HepG2 (cell line): ENCODE measurements at regions of chr7 and their contacts with region 1.

Region 1: DNA sequence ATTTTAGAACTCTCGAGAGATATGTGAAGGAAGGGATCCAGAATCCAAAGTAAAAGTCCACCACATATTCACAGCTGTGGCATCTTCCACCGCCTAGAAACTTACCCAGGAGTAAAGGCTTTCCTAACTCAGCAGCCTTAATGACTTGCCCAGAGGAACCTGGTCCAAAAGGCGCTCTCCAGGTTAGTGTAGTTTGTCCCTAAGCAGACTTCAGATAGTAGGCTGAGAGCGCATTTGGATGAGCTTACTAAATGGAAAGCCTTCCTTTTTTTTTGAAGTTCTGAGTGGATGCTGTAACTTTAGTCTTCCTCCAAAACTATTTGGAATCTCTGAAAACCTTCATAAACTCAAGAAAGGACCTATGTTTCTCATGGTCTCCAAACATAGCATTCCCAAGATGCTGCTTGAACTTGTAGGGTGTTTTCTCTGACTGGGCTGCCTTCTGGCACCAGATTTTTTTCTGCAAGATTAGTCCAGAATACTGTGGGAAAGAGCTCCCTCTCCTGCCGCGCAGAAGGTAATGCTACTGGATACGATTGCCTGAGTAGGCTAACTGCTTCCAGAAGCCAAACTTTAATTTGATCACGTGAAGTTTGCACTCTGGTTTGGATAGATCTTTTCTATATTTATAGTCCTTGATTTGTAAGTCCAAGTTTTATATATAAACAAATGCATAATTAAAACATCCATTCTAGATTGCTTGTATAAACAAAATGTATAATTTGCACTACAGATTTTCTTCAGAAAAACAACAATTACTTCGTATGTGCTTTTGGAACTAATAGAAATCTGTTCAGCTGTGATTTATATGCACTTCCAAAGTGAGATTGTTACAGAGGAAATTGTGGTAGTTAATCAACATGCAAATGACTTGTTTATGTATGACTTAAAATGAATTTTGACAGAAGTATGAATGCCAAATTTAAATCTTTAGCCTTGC is 19.6 kb upstream of the GPR37 start:
- DNase-seq: peak; percentile 37
- ATAC-seq: peak; percentile 88
- H3K4me3 ChIP-seq: no peak overlapping the region
- H3K27ac ChIP-seq: no peak overlapping the region
- H3K4me1 ChIP-seq: peaks cover 12% of the 10 kb centered on the region; the same call in 1 of the 2 replicates
- H3K27me3 ChIP-seq: no peaks in the 10 kb centered on the region
- CTCF ChIP-seq: peak; percentile 86
- EP300 ChIP-seq: no peak
- POLR2A ChIP-seq: no peak
- RAD21 ChIP-seq: peak; percentile 85

Region 2: DNA sequence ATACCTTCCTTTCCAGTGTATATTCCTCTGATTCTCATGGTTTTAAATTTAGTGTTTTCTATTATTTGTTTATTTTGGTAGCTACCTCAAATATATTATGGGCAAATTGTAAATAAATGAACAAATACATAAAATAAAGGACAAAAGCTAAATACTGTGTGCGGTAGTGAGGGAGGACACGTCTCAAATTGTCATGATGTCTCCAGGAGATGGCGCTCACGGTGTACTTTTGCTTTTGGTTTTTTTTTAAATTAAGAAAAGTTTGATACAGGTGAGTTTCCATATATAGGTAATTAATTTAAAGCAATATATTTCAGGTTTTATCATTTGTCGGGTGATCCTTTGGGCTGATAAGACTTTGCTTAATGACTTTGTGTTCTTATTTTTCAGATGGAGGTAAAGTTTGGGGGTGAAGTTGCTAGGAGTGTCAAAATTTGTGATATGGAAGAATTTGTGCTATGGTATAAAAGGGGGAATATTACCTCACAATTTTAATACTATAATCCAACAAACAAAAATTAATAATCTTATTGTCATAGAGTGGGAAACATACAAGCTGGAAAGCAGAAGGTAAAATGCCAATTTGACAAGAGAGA is 683.9 kb before region 1 on chr7:
- CTCF ChIA-PET with region 1: no interaction called
- POLR2A ChIA-PET with region 1: no interaction called
- in situ Hi-C with region 1: no loop called
- intact Hi-C with region 1: loop called (anchors 1 kb)
- DNase-seq: peak; percentile 14
- ATAC-seq: peak; percentile 52; the same call in 2 of the 3 replicates
- H3K4me3 ChIP-seq: no peak overlapping the region
- H3K27ac ChIP-seq: no peak overlapping the region
- H3K4me1 ChIP-seq: no peaks in the 10 kb centered on the region
- H3K27me3 ChIP-seq: no peaks in the 10 kb centered on the region
- CTCF ChIP-seq: peak; percentile 41
- EP300 ChIP-seq: no peak
- POLR2A ChIP-seq: no peak
- RAD21 ChIP-seq: no peak

Region 3: GRCh38 chr7:124152859-124153692 is 632.1 kb before region 1 on chr7:
- CTCF ChIA-PET with region 1: interaction called, 9 read pairs
- POLR2A ChIA-PET with region 1: no interaction called
- in situ Hi-C with region 1: loop called (anchors 5 kb)
- intact Hi-C with region 1: loop called (anchors 1 kb)
- DNase-seq: peak; percentile 27
- ATAC-seq: peak; percentile 95
- H3K4me3 ChIP-seq: no peak overlapping the region
- H3K27ac ChIP-seq: no peak overlapping the region
- H3K4me1 ChIP-seq: no peaks in the 10 kb centered on the region
- H3K27me3 ChIP-seq: no peaks in the 10 kb centered on the region
- CTCF ChIP-seq: peak; percentile 46
- EP300 ChIP-seq: no peak
- POLR2A ChIP-seq: no peak
- RAD21 ChIP-seq: no peak

Region 4: DNA sequence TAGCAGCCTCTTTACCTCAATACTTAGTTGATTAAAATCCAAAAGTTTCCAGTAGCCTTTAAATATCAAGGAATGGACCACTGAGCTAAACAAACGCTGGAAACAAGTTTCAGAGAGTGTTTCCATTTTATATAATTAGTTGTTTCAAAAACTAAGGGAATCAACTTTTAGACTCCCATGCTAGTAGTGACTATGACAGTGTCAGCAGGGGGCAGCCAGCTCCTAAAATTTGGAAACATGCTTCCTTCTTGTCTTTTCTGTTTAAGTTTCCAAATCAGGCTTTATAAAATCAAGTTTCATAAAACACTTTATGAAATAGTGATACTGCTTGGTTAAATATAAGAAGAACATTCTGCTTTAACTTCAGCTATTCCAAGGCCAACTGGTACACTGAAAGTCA is 614.1 kb before region 1 on chr7:
- CTCF ChIA-PET with region 1: interaction called, 3 read pairs
- POLR2A ChIA-PET with region 1: no interaction called
- in situ Hi-C with region 1: no loop called
- intact Hi-C with region 1: loop called (anchors 1 kb)
- DNase-seq: no peak
- ATAC-seq: no peak
- H3K4me3 ChIP-seq: no peak overlapping the region
- H3K27ac ChIP-seq: no peak overlapping the region
- H3K4me1 ChIP-seq: no peaks in the 10 kb centered on the region
- H3K27me3 ChIP-seq: no peaks in the 10 kb centered on the region
- CTCF ChIP-seq: peak; percentile 29
- EP300 ChIP-seq: no peak
- POLR2A ChIP-seq: no peak
- RAD21 ChIP-seq: no peak

Region 5: DNA sequence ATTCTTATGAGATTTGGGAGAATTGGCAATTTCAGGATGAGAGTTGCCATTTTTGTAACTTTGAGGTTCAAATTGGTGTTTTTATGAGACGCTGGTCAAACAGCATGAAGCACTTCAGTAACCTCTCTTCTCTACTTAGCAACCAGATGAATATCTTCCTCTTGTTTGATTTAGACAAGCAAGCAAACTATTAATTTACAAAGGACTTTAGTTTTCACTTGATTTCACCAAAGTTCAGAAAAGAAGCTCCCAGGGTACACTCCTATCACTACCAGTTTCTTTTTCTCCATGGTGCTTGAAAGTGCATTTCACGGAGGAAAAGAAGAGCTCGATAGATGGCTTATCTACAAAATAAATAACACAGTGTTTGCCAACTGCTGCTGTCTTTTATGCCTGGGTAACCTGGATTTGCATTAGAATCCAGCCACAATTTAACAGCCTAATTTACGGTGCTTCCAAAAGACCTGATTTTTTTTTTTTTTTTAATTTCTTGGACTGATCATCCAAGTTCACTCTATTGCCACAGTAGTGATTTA is 295.3 kb before region 1 on chr7:
- CTCF ChIA-PET with region 1: no interaction called
- POLR2A ChIA-PET with region 1: no interaction called
- in situ Hi-C with region 1: no loop called
- intact Hi-C with region 1: loop called (anchors 10 kb)
- DNase-seq: peak; percentile 37
- ATAC-seq: peak; percentile 95
- H3K4me3 ChIP-seq: no peak overlapping the region
- H3K27ac ChIP-seq: no peak overlapping the region
- H3K4me1 ChIP-seq: peaks cover 19% of the 10 kb centered on the region
- H3K27me3 ChIP-seq: no peaks in the 10 kb centered on the region
- CTCF ChIP-seq: no peak
- EP300 ChIP-seq: peak in 1 of 2 experiments; percentile 41; a peak in 1 of 4 replicates
- POLR2A ChIP-seq: no peak
- RAD21 ChIP-seq: no peak